Transverse colon (tissue), 4 donors: ENCODE measurements at regions of chr5 and their contacts with region 1.

Region 1: DNA sequence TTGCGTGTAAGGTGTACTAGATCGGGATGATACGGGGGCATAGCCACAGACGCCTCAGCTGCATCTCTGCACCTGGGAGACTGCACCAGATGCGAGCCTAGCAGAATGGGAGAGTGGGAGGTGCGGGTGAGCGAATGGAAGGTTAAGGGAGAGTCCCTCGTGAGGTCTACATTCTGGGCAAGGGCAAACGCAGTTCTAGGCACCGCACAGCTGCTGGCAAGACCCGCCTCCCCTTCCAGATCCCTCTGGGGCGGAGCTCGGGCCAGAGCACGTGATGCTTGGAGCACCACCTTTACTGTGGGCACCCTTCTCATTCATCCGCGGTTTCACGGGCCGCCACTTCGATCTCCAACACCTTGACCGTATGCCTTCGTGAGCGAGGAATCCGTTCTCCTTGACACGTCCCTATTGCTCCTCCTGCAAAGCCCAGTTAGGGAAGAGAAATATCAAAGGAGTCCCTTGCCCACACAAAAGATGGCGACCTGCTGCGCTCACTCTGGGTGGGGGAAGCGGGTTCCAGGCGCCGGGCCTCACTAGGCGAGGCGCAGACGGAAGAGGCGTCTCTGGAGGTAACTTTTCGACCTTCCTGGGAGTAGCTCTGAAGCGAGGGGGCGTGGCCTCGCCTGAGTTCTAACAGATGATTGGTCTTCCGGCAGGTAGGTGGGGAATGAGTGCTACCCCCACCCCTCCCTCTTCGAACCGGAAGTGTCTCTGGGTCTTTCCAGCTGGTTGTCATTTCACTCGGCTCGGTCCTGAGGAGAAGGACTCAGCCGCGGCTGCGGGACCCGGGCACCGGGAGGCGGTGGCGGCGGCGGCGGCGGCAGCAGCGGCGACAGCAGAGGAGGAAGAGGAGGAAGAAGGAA is at the start of gene CPEB4:
- DNase-seq: peak; percentile 99
- H3K4me3 ChIP-seq: peak within 1 kb of the TSS; percentile 73 to 98 (median 88)
- H3K27ac ChIP-seq: peak within 1 kb of the TSS; percentile 84 to 93 (median 88)
- H3K4me1 ChIP-seq: peaks cover 7 to 73% (median 50%) of the 10 kb centered on the region in 4 donors
- H3K27me3 ChIP-seq: no peaks in the 10 kb centered on the region
- CTCF ChIP-seq: no peak
- EP300 ChIP-seq: no peak
- POLR2A ChIP-seq: peak; percentile 98
- total RNA-seq, gene CPEB4: 23.6 to 67.7 (median 36.5) TPM

Region 2: DNA sequence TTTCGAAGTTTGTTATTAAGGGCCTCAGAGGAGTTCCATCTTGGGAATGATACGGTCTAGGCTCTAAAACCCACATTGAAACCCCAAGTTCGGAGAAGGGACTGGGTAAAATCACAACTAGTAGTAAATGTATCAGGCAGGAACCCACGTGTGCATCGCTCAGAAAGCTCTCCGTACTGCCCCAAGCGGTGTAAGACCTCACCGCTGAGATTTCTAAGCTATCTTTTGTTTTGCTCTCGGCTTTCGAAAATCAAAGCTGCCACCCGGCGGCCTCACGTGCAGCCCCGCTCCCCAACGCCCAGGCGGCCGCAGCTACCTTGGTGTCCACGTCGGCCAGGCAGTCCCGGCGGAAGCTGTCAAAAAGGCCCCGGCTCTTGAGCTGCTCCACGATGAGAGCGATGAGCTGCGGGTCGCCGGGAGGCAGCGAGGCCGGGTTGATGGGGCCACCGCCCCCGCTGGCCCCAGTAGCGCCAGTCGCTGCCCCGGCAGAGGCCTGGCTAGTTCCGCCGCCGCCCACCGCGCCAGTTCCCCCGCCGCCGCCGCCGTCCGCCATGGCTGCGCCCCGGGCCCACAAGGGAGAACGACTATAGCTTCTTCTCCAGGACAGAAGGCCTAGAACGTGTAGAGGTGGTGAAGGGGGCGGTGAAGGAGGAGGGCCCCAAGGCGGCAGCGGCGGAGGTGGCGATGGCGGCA is 271.8 kb before region 1 on chr5:
- in situ Hi-C with region 1: no loop called
- intact Hi-C with region 1: loop called (anchors 10 kb)
- DNase-seq: peak; percentile 70
- H3K4me3 ChIP-seq: peak overlapping the region; percentile 93 to 100 (median 96)
- H3K27ac ChIP-seq: peak overlapping the region; percentile 95 to 98 (median 96)
- H3K4me1 ChIP-seq: peaks cover 13 to 28% (median 20%) of the 10 kb centered on the region in 4 donors
- H3K27me3 ChIP-seq: no peaks in the 10 kb centered on the region
- CTCF ChIP-seq: peak; percentile 56 to 81 (median 70)
- EP300 ChIP-seq: no peak
- POLR2A ChIP-seq: no peak

Region 3: DNA sequence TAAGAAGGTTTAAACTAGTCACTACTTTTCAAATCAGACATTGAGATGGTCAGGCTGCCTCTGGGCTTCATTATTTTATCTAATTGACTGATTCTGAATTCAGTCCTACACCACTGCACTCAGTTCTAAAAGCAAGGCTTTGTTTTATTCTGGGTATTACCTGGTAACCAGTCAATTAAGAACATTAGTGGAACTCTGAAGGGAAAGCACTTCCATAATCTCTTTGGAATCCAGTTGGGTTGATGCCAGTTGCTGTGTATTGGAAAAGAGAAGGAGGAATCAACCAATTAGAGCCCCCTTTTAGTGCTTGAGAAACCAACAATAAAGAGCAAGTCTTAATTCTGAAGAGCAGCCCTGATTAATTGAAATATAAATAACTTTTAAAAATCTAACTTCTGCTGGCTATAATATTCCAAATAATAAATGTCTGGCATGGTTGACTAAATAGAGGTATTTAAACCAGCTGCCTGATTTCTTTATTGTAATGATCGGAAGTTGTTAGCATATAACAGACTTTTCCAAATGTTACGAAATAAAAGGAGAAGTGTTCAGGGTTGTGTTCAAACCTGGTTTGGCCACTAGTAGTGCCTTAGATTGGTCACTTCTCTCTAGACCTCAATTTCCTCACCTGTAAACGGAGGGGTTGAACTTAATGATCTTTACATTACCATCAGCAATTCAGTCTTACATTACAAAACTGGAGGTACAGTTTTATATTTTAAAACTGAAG is 32.3 kb after region 1 on chr5:
- in situ Hi-C with region 1: no loop called
- intact Hi-C with region 1: loop called (anchors 2 kb)
- DNase-seq: no peak
- H3K4me3 ChIP-seq: no peak overlapping the region
- H3K27ac ChIP-seq: peak overlapping the region; percentile 81 to 90 (median 86)
- H3K4me1 ChIP-seq: peaks cover 44 to 73% (median 50%) of the 10 kb centered on the region in 4 donors
- H3K27me3 ChIP-seq: no peaks in the 10 kb centered on the region
- CTCF ChIP-seq: peak in 3 of 5 experiments; percentile 10 to 48 (median 45)
- EP300 ChIP-seq: no peak
- POLR2A ChIP-seq: no peak

Region 4: DNA sequence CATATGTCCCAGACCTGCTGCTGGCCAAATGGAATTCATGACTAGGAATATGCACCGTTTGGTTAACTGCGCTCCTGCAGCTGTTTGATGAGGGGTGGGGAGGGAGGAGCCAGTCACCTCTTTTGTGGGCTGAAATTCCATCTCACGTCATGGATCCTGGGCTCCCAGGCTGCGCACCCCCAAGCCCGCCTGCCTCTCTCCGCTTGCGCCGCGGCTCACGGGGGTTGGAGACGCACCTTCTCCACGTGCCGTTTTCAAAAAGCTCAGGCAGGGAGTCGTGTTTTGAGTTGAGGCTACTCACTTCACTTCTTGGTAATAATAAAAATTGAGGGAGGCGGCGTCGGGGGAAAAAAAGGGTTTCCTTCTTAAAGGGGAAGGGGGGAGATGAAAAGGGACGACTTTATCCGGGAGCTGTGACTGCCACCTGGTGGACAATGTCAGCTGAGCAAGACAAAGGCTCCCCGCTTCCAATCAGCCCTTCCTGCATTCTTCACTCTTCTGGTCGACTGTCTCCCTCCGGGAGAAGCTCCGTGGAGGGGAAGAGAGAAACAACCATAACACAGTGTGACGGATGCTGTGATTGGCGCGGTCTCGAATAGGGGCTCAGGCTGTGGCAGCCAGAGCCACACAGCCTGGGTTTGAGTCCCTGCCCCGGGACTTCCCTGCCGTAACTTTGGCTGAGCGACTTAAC is 85.2 kb after region 1 on chr5:
- in situ Hi-C with region 1: no loop called
- intact Hi-C with region 1: loop called (anchors 5 kb)
- DNase-seq: peak; percentile 86
- H3K4me3 ChIP-seq: peak overlapping the region; percentile 10 to 48 (median 26)
- H3K27ac ChIP-seq: peak overlapping the region in 1 of 4 donors; percentile 19
- H3K4me1 ChIP-seq: peaks cover 4 to 10% (median 5%) of the 10 kb centered on the region in 4 donors
- H3K27me3 ChIP-seq: no peaks in the 10 kb centered on the region
- CTCF ChIP-seq: peak; percentile 88 to 95 (median 89)
- EP300 ChIP-seq: no peak
- POLR2A ChIP-seq: no peak